Cardiac septum (tissue), 1 donor: ENCODE measurements at regions of chr14 and their contacts with region 1.

Region 1: GRCh38 chr14:45083971-45084722 is at the start of gene PRPF39:
- DNase-seq: peak; percentile 99
- total RNA-seq, gene PRPF39: 14.3 TPM

Region 2: GRCh38 chr14:44897045-44897844 is 186.9 kb before region 1 on chr14:
- intact Hi-C with region 1: loop called (anchors 2 kb)
- DNase-seq: peak; percentile 99

Region 3: DNA sequence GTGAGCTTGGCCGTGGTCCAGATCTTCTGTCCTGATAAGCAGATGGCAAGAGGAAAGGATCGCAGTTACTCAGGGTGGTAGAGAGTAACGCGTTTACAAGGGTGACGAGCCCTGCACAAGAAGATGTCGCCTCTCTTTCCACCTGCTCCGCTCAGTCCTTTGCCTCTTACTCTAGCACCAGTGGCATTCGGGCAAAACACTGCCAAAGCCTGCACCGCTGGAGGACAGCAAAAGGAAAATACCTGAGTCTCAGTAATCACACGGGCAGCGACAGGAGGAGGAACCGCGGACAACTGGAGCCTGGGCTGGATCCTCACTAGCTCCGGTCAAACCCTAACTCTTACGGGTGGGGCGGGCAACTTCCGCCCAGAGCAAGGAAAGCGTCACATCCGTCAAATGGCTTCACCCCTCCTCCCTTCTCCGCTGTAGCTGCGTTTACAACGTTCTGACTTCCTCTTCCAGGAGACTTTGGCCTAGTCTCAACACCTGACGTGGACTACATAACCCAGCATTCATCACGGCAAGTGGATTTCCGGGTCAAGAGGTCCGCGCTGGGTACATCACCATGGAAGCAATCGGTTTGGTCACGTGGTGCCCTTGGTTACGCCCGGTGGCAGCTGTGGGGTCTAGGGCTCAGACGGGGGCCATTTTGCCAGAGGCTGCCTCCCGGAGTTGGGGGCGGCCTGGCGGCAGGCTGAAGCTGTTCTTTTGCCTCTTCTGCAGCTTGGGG is 122.4 kb before region 1 on chr14 and contains the starts of genes KLHL28 and TOGARAM1:
- intact Hi-C with region 1: loop called (anchors 5 kb)
- DNase-seq: peak; percentile 98
- total RNA-seq, gene KLHL28: 11.2 TPM
- total RNA-seq, gene TOGARAM1: 16.3 TPM

Region 4: DNA sequence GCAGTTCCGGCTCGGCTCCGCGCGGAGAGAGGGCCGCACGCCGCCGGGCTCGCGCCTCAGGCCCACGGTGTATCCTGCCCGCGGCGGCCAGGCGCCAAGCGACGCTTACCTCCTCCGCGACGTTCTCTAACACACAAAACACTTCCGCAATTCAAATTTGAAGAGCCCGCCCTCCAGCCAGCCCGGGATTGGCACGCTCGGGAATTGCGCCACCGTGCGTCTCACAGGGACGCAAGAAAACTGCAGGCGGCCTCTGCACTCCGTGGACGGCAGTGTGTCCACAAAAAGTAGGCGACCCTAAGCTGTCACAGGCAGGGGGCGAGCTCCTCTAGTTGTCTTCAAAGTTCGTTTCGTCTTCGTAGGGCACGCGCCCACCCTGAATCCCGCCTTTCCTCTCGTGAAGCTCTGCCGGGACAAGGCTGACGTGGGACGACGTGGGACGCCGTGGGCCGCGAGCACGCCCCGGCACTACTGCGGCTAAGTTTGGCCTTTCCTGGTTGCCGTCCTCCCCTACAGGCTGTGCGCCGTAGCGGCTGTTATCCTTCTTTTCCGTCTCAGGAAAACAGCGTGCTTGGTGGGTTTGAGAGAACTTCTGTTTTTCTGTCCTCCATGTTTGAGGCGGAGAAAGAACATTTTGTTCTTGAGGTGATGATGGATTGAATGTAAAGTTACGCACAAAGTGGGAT is 169.1 kb after region 1 on chr14 and contains the start of gene MIS18BP1:
- intact Hi-C with region 1: loop called (anchors 5 kb)
- DNase-seq: peak; percentile 97
- total RNA-seq, gene MIS18BP1: 9.7 TPM